ENCODE measurements at regions of chr9 and their contacts with region 1.

Region 1: GRCh38 chr9:105694190-105694847 is at the start of gene TMEM38B:
- DNase-seq: peak; percentile 79 to 91 (median 87)
- ATAC-seq: peak; percentile 87 to 98 (median 96)
- H3K4me3 ChIP-seq: peak within 1 kb of the TSS; percentile 74 to 90 (median 81)
- H3K27ac ChIP-seq: peak within 1 kb of the TSS; percentile 47 to 95 (median 84)
- H3K4me1 ChIP-seq: peaks cover 0 to 44% (median 10%) of the 10 kb centered on the region in 12 donors
- H3K27me3 ChIP-seq: peaks cover 0 to 30% (median 3%) of the 10 kb centered on the region in 9 donors
- CTCF ChIP-seq: no peak
- POLR2A ChIP-seq: peak in 1 of 2 donors; percentile 63
- total RNA-seq, gene TMEM38B: 39.9 to 66.9 (median 52.0) TPM

Region 2: GRCh38 chr9:105656131-105656921 is 38.0 kb before region 1 on chr9:
- intact Hi-C with region 1: loop called in 1 of 10 experiments (anchors 5 kb)
- DNase-seq: peak; percentile 8 to 70 (median 28)
- ATAC-seq: peak; percentile 49 to 94 (median 84)
- H3K4me3 ChIP-seq: peak overlapping the region; percentile 39 to 65 (median 58)
- H3K27ac ChIP-seq: no peak overlapping the region
- H3K4me1 ChIP-seq: peaks cover 0 to 15% (median 5%) of the 10 kb centered on the region in 12 donors
- H3K27me3 ChIP-seq: peaks cover 0 to 26% (median 2%) of the 10 kb centered on the region in 9 donors
- CTCF ChIP-seq: peak; percentile 8 to 61 (median 44)
- POLR2A ChIP-seq: no peak

Region 3: DNA sequence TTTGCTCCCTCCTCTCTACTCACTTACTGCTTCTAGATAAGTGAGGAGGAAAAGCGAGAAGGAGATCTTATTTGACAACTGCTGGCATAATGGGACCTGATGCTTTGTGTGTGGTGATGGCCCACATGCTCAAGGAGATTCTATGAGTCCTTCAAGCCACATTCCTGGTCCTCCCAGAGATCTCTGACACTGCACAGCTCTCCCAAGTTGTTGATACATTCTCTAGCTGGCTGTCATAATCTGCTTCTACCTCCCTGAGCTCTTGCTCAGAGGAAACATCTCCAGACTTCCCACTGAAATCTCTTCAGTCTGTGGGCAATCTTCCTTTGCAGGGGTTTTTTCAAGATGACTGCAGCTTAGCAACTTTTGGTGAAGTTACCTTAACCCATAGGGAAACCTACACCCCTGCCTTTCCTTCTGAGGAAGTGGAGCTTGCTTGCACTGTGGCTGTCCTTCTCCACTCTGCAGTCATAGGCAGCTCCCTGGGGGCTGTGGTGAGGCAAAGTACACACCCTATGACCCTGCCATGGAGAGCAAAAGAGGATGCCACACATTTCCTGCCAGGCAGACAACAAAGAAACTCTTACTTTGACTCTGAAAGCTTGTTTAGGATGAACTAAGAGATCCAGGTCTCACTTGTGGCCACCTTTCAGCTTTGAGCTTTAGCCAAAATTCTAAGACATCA is 163.8 kb after region 1 on chr9:
- intact Hi-C with region 1: no loop called
- DNase-seq: no peak
- ATAC-seq: no peak
- H3K4me3 ChIP-seq: no peak overlapping the region
- H3K27ac ChIP-seq: no peak overlapping the region
- H3K4me1 ChIP-seq: peaks cover 0 to 4% (median 0%) of the 10 kb centered on the region in 12 donors
- H3K27me3 ChIP-seq: no peaks in the 10 kb centered on the region
- CTCF ChIP-seq: no peak
- POLR2A ChIP-seq: no peak

Region 4: GRCh38 chr9:105911104-105911911 is 217.0 kb after region 1 on chr9:
- intact Hi-C with region 1: no loop called
- DNase-seq: no peak
- ATAC-seq: no peak
- H3K4me3 ChIP-seq: no peak overlapping the region
- H3K27ac ChIP-seq: no peak overlapping the region
- H3K4me1 ChIP-seq: peaks cover 0 to 6% (median 0%) of the 10 kb centered on the region in 12 donors
- H3K27me3 ChIP-seq: no peaks in the 10 kb centered on the region
- CTCF ChIP-seq: no peak
- POLR2A ChIP-seq: no peak

Measured in heart left ventricle (tissue), 16 donors.